ENCODE measurements at regions of chr2 and their contacts with region 1.

Region 1: GRCh38 chr2:219119422-219120043 is 41.1 kb downstream of the NHEJ1 start:
- DNase-seq: peak in 1 of 2 experiments; percentile 79
- H3K4me3 ChIP-seq: no peak overlapping the region
- H3K27ac ChIP-seq: no peak overlapping the region
- H3K4me1 ChIP-seq: no peaks in the 10 kb centered on the region; a peak in 2 of 7 replicates
- H3K27me3 ChIP-seq: no peaks in the 10 kb centered on the region
- CTCF ChIP-seq: peak; percentile 64 to 82 (median 67)
- EP300 ChIP-seq: no peak
- POLR2A ChIP-seq: no peak
- RAD21 ChIP-seq: peak; percentile 90 to 92

Region 2: GRCh38 chr2:218995972-218996711 is 123.4 kb before region 1 on chr2:
- CTCF ChIA-PET with region 1: interaction called, 25 read pairs
- POLR2A ChIA-PET with region 1: no interaction called
- DNase-seq: peak in 1 of 2 experiments; percentile 99
- H3K4me3 ChIP-seq: peak overlapping the region in 3 of 4 experiments; percentile 27 to 49 (median 34); a peak in 4 of 8 replicates
- H3K27ac ChIP-seq: no peak overlapping the region
- H3K4me1 ChIP-seq: peaks cover 0 to 43% (median 26%) of the 10 kb centered on the region in 4 experiments; a peak in 6 of 7 replicates
- H3K27me3 ChIP-seq: peaks cover 98 to 100% (median 99%) of the 10 kb centered on the region in 4 experiments
- CTCF ChIP-seq: peak in 2 of 3 experiments; percentile 88; a peak in 3 of 4 replicates
- EP300 ChIP-seq: 0 out of 3 replicates have a peak, but pooled peaks of 1 of the 2 experiments have one; percentile 20
- POLR2A ChIP-seq: no peak
- RAD21 ChIP-seq: peak; percentile 79 to 89

Region 3: DNA sequence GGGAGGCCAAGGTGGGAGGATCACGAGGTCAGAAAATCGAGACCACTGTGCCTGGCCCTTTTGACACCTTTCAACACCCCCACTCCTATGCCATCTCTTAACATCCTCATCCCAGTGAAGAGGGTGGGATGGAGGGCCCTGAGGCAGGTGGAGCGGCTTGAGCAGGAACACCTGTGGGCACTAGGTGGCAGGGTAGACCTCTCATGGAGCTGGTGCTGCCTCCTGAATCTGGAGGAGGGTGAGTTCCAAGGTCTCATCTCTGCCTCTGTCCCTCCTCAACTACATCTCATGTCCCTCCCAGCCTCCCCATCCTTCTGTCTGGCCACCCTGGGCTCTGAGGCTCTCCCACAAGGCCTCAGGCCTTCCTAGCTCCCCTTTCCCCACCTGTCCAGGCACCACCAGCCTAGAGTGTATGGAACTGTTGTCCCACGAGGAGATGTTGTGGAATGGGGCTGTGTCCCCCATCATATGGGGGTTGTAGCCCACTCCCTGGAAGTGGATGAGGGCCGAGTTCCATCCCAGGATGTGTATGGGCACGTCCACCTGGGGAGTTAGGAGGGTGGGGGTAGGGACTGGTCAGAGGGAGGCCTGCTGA is 109.3 kb before region 1 on chr2:
- CTCF ChIA-PET with region 1: interaction called, 68 read pairs
- POLR2A ChIA-PET with region 1: no interaction called
- DNase-seq: no peak
- H3K4me3 ChIP-seq: no peak overlapping the region
- H3K27ac ChIP-seq: no peak overlapping the region
- H3K4me1 ChIP-seq: no peaks in the 10 kb centered on the region
- H3K27me3 ChIP-seq: peaks cover 1 to 21% (median 10%) of the 10 kb centered on the region in 4 experiments
- CTCF ChIP-seq: peak; percentile 67 to 85 (median 81)
- EP300 ChIP-seq: no peak
- POLR2A ChIP-seq: no peak
- RAD21 ChIP-seq: peak; percentile 69 to 75

Region 4: GRCh38 chr2:219142329-219142728 is 22.8 kb after region 1 on chr2:
- CTCF ChIA-PET with region 1: interaction called, 12 read pairs
- POLR2A ChIA-PET with region 1: no interaction called
- DNase-seq: no peak
- H3K4me3 ChIP-seq: no peak overlapping the region
- H3K27ac ChIP-seq: no peak overlapping the region
- H3K4me1 ChIP-seq: no peaks in the 10 kb centered on the region
- H3K27me3 ChIP-seq: no peaks in the 10 kb centered on the region
- CTCF ChIP-seq: no peak
- EP300 ChIP-seq: no peak
- POLR2A ChIP-seq: no peak
- RAD21 ChIP-seq: no peak

Region 5: GRCh38 chr2:219218732-219219701 is 99.5 kb after region 1 on chr2 and contains the start of gene ABCB6:
- CTCF ChIA-PET with region 1: no interaction called
- POLR2A ChIA-PET with region 1: no interaction called
- DNase-seq: peak in 1 of 2 experiments; percentile 92
- H3K4me3 ChIP-seq: peak within 1 kb of the TSS; percentile 66 to 80 (median 75)
- H3K27ac ChIP-seq: peak within 1 kb of the TSS; percentile 76; the same call in 1 of the 2 replicates
- H3K4me1 ChIP-seq: peaks cover 0 to 12% (median 6%) of the 10 kb centered on the region in 4 experiments; a peak in 3 of 7 replicates
- H3K27me3 ChIP-seq: no peaks in the 10 kb centered on the region; a peak in 1 of 7 replicates
- CTCF ChIP-seq: peak in 1 of 3 experiments; percentile 2; a peak in 2 of 4 replicates
- EP300 ChIP-seq: no peak
- POLR2A ChIP-seq: peak in 1 of 2 experiments; percentile 93; a peak in 2 of 3 replicates
- RAD21 ChIP-seq: peak in 1 of 2 experiments; percentile 11; a peak in 1 of 4 replicates
- total RNA-seq, gene ABCB6: 44.9 and 49.9 TPM in 2 replicates